ENCODE measurements at regions of chr13 and their contacts with region 1.

Region 1: GRCh38 chr13:23020223-23020843 is 160.4 kb upstream of the SGCG start:
- DNase-seq: no peak
- H3K4me3 ChIP-seq: no peak overlapping the region
- H3K27ac ChIP-seq: no peak overlapping the region
- H3K27me3 ChIP-seq: no peaks in the 10 kb centered on the region
- CTCF ChIP-seq: peak; percentile 83

Region 2: GRCh38 chr13:23007426-23007825 is 12.9 kb before region 1 on chr13:
- CTCF ChIA-PET with region 1: interaction called, 12 read pairs
- POLR2A ChIA-PET with region 1: no interaction called
- DNase-seq: no peak
- H3K4me3 ChIP-seq: no peak overlapping the region
- H3K27ac ChIP-seq: no peak overlapping the region
- H3K27me3 ChIP-seq: no peaks in the 10 kb centered on the region
- CTCF ChIP-seq: no peak